ENCODE measurements at regions of chr12 and their contacts with region 1.

Region 1: DNA sequence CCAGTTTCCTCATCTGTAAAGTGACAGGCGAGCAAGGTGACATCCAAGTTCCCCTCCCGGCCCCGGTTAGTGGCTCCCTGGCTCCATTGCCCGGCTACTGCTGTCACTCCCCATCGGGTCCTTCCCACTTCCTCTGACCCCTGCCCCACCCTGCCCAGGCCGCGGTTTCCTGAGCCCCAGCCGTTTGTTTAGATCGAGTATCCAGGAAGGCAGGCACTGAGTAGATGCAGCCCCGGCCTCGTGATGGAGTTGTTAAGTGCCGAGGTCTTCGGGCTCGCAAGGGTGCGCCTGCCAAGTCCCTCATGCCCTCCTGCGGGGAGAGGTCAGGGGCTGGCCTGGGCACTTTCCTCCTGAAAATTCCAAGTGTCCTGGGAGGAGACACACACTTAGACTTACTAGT is 55.4 kb downstream of the TEAD4 start:
- DNase-seq: no peak
- H3K4me3 ChIP-seq: no peak overlapping the region
- H3K27ac ChIP-seq: no peak overlapping the region
- H3K4me1 ChIP-seq: no peaks in the 10 kb centered on the region; a peak in 1 of 7 replicates
- H3K27me3 ChIP-seq: no peaks in the 10 kb centered on the region
- CTCF ChIP-seq: no peak
- EP300 ChIP-seq: no peak
- POLR2A ChIP-seq: no peak
- RAD21 ChIP-seq: no peak

Region 2: GRCh38 chr12:3028108-3028507 is 13.5 kb after region 1 on chr12:
- CTCF ChIA-PET with region 1: interaction called, 27 read pairs
- POLR2A ChIA-PET with region 1: interaction called, 5 read pairs
- DNase-seq: no peak
- H3K4me3 ChIP-seq: no peak overlapping the region
- H3K27ac ChIP-seq: no peak overlapping the region
- H3K4me1 ChIP-seq: no peaks in the 10 kb centered on the region
- H3K27me3 ChIP-seq: no peaks in the 10 kb centered on the region
- CTCF ChIP-seq: no peak
- EP300 ChIP-seq: no peak
- POLR2A ChIP-seq: no peak
- RAD21 ChIP-seq: no peak

Measured in H1 (cell line).